ENCODE measurements at regions of chr2 and their contacts with region 1.

Region 1: DNA sequence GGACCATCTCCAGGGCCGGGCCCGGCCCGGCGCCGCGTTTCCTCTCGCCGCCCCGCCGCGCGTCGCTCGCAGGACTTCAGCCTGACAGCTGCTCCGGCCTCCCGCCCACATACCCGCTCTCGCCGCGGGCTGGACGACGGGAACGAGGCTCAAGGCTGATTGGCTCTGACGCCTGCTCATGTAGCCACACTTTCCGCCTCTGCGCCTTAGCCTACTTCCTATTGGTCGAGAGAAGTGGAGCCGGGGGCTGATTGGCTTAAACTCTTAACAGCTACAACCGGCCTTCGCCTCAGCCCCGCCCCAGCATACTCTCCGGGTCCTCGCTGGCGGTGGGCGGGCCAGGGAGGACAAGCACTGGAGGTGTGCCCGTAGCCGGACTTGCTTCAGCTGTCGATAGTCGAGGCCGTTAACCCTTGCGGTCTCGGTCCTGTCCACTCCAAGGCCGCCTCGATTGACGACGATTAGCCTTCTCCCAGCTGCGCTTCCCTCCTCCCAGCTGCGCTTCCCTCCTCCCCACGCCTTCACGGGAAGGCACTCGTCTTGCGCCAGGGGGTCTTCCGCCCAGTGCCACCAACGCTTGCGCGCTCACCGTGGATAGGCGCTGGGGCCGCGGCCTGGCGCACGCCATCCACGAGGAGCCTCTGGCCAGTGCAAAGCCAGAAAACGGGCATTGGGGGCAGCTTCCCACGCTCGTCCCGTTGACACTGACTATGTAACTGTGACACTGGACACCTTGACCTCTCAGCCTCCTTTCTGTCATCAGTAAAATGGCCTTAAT is at the start of gene PRADC1:
- DNase-seq: peak; percentile 98
- CTCF ChIP-seq: no peak

Region 2: GRCh38 chr2:73035899-73036711 is 197.2 kb before region 1 on chr2:
- CTCF ChIA-PET with region 1: no interaction called
- POLR2A ChIA-PET with region 1: no interaction called
- DNase-seq: no peak
- CTCF ChIP-seq: no peak

Region 3: DNA sequence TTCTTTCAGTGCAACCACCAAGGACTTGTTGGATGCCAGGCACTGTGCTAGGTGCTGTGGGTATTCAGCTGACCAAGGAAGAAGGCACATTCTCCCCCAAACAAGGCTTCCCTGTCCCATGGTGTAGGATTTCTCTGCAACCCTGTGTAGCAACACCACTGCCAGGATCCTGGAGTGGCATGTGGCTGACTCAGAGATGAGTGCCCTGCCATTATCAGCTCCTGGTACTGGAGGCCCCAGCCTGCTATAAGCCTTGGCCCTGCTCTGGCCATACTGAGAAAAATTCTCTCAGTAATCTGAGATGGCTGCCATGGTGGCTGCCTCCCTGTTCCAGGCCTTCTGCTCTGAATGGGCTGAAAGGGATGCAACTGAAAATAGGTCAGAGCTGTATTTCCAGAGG is 15.0 kb before region 1 on chr2:
- CTCF ChIA-PET with region 1: interaction called, 70 read pairs
- POLR2A ChIA-PET with region 1: interaction called, 18 read pairs
- DNase-seq: no peak
- CTCF ChIP-seq: no peak

Region 4: GRCh38 chr2:73243884-73244570 is 10.7 kb after region 1 on chr2:
- CTCF ChIA-PET with region 1: interaction called, 19 read pairs
- POLR2A ChIA-PET with region 1: no interaction called
- DNase-seq: no peak
- CTCF ChIP-seq: no peak

Region 5: GRCh38 chr2:74130163-74130995 is 897.0 kb after region 1 on chr2:
- CTCF ChIA-PET with region 1: no interaction called
- POLR2A ChIA-PET with region 1: interaction called, 15 read pairs
- DNase-seq: no peak
- CTCF ChIP-seq: no peak